Heart left ventricle (tissue), 16 donors: ENCODE measurements at regions of chr17 and their contacts with region 1.

Region 1: DNA sequence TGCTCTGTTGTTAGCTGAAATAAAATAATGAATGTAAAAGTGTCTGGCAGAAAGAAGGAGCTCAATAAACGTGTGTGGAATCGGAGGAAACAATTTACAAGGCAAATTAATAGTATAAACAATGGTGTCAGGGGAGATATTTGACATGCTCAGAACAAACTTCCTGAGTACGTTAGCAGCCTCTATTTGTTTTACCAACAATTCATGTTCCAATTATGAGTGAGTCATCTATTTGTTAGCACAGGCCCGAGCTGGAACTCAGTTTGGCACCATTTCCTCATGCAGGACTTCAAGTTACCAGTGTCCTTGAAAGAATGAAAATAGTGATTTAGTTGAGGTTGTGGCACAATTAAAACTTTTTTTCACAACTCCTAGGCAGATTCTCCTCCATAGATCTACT is 9.1 kb downstream of the ASIC2 start:
- DNase-seq: peak in 1 of 5 donors; percentile 32
- ATAC-seq: peak in 3 of 4 donors; percentile 36 to 65 (median 42)
- H3K4me3 ChIP-seq: no peak overlapping the region
- H3K27ac ChIP-seq: no peak overlapping the region
- H3K4me1 ChIP-seq: peaks cover 0 to 9% (median 0%) of the 10 kb centered on the region in 12 donors
- H3K27me3 ChIP-seq: peaks cover 0 to 22% (median 0%) of the 10 kb centered on the region in 9 donors
- CTCF ChIP-seq: no peak
- POLR2A ChIP-seq: no peak

Region 2: GRCh38 chr17:33234930-33235685 is 48.9 kb before region 1 on chr17:
- intact Hi-C with region 1: loop called in 2 of 10 experiments (anchors 5 to 10 kb)
- DNase-seq: peak; percentile 27 to 79 (median 71)
- ATAC-seq: peak; percentile 77 to 97 (median 94)
- H3K4me3 ChIP-seq: no peak overlapping the region
- H3K27ac ChIP-seq: peak overlapping the region in 1 of 12 donors; percentile 31
- H3K4me1 ChIP-seq: peaks cover 0 to 19% (median 5%) of the 10 kb centered on the region in 12 donors
- H3K27me3 ChIP-seq: peaks cover 0 to 7% (median 0%) of the 10 kb centered on the region in 9 donors
- CTCF ChIP-seq: no peak
- POLR2A ChIP-seq: no peak

Region 3: DNA sequence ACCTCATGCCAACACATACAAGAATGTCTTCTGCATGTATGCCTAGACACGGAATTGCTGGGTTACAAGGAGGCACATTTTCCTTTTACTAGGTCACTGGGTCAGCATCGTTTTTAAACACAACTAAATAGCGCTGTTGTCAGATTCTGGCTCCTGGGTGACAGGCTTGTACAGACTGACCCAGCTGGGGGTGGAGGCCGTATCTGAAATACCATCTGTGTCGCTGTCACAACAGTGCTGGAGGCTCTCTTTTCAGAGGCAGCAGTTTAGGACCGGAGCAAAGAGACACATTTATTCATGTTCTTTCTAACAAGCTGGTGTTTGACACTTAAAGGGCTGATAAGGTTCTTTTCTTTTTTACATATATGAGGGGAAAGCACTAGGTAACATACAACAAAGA is 412.1 kb after region 1 on chr17:
- intact Hi-C with region 1: no loop called
- DNase-seq: no peak
- ATAC-seq: no peak
- H3K4me3 ChIP-seq: no peak overlapping the region
- H3K27ac ChIP-seq: no peak overlapping the region
- H3K4me1 ChIP-seq: no peaks in the 10 kb centered on the region
- H3K27me3 ChIP-seq: peaks cover 0 to 16% (median 0%) of the 10 kb centered on the region in 9 donors
- CTCF ChIP-seq: no peak
- POLR2A ChIP-seq: no peak